ENCODE measurements at regions of chr21 and their contacts with region 1.

Region 1: GRCh38 chr21:44299458-44300261 is at the start of gene PFKL:
- DNase-seq: peak; percentile 80
- ATAC-seq: peak; percentile 65
- H3K4me3 Mint-ChIP-seq: peak within 1 kb of the TSS; percentile 86
- H3K27ac Mint-ChIP-seq: peak within 1 kb of the TSS; percentile 95
- H3K4me1 Mint-ChIP-seq: peaks cover 73% of the 10 kb centered on the region
- H3K27me3 Mint-ChIP-seq: no peaks in the 10 kb centered on the region
- CTCF ChIP-seq: no peak
- total RNA-seq, gene PFKL: 167 and 174 TPM in 2 replicates

Region 2: DNA sequence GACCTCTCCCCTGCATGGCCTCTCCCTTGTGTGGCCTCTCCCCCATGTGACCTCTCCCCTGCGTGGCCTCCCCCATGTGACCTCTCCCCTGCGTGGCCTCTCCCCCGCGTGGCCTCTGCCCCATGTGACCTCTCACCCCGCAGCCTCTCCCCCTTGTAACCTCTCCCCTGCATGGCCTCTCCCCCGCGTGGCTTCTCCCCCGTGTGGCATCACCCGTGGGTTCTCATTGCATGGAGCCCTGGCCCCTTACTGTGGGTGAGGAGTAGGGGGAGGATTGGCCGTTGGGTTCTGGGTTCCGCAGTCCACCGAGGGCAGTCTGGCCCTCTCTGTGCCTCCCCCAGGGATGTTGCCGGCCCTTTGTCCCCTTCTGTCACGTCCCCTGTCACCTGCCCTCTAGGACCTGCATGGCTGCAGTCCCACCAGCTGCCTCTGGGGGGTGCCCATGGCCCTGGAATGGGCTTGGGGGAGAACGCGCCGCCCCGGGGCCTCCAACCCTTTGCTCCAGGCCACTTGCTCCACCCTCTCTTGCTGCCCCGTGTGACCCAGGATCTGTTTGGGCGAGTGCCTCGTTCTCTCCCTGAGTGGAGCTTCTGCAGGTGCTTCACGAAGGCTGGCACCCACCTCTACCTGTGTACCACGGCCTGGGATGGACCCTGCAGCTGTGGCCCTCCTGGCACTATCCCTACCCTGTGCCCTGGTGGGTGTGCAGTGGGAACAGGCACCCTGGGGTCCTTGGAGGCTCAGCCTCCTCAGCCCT is 489.0 kb before region 1 on chr21:
- CTCF ChIA-PET with region 1: no interaction called
- POLR2A ChIA-PET with region 1: no interaction called
- intact Hi-C with region 1: loop called (anchors 10 kb)
- DNase-seq: peak; percentile 88
- ATAC-seq: peak; percentile 97
- H3K4me3 Mint-ChIP-seq: no peak overlapping the region
- H3K27ac Mint-ChIP-seq: no peak overlapping the region
- H3K4me1 Mint-ChIP-seq: peaks cover 28% of the 10 kb centered on the region
- H3K27me3 Mint-ChIP-seq: peaks cover 7% of the 10 kb centered on the region
- CTCF ChIP-seq: peak; percentile 68

Region 3: GRCh38 chr21:44199465-44199864 is 100.2 kb before region 1 on chr21:
- CTCF ChIA-PET with region 1: no interaction called
- POLR2A ChIA-PET with region 1: no interaction called
- intact Hi-C with region 1: no loop called
- DNase-seq: no peak
- ATAC-seq: no peak
- H3K4me3 Mint-ChIP-seq: no peak overlapping the region
- H3K27ac Mint-ChIP-seq: peak overlapping the region; percentile 50
- H3K4me1 Mint-ChIP-seq: peaks cover 14% of the 10 kb centered on the region
- H3K27me3 Mint-ChIP-seq: no peaks in the 10 kb centered on the region
- CTCF ChIP-seq: no peak

Region 4: GRCh38 chr21:44378646-44379514 is 79.2 kb after region 1 on chr21:
- CTCF ChIA-PET with region 1: no interaction called
- POLR2A ChIA-PET with region 1: no interaction called
- intact Hi-C with region 1: no loop called
- DNase-seq: no peak
- ATAC-seq: no peak
- H3K4me3 Mint-ChIP-seq: no peak overlapping the region
- H3K27ac Mint-ChIP-seq: no peak overlapping the region
- H3K4me1 Mint-ChIP-seq: peaks cover 23% of the 10 kb centered on the region
- H3K27me3 Mint-ChIP-seq: peaks cover 2% of the 10 kb centered on the region
- CTCF ChIP-seq: no peak

Region 5: GRCh38 chr21:44454747-44455523 is 155.3 kb after region 1 on chr21 and contains the start of gene LRRC3:
- CTCF ChIA-PET with region 1: interaction called, 3 read pairs
- POLR2A ChIA-PET with region 1: no interaction called
- intact Hi-C with region 1: loop called (anchors 10 kb)
- DNase-seq: peak; percentile 71
- ATAC-seq: peak; percentile 82
- H3K4me3 Mint-ChIP-seq: peak within 1 kb of the TSS; percentile 75
- H3K27ac Mint-ChIP-seq: no peak within 1 kb of the TSS
- H3K4me1 Mint-ChIP-seq: peaks cover 2% of the 10 kb centered on the region
- H3K27me3 Mint-ChIP-seq: peaks cover 4% of the 10 kb centered on the region
- CTCF ChIP-seq: no peak
- total RNA-seq, gene LRRC3: 0.91 and 1.00 TPM in 2 replicates

Region 6: GRCh38 chr21:44478124-44478800 is 178.6 kb after region 1 on chr21:
- CTCF ChIA-PET with region 1: no interaction called
- POLR2A ChIA-PET with region 1: no interaction called
- intact Hi-C with region 1: loop called (anchors 2 kb)
- DNase-seq: no peak
- ATAC-seq: no peak
- H3K4me3 Mint-ChIP-seq: no peak overlapping the region
- H3K27ac Mint-ChIP-seq: no peak overlapping the region
- H3K4me1 Mint-ChIP-seq: peaks cover 4% of the 10 kb centered on the region
- H3K27me3 Mint-ChIP-seq: peaks cover 4% of the 10 kb centered on the region
- CTCF ChIP-seq: no peak

Region 7: DNA sequence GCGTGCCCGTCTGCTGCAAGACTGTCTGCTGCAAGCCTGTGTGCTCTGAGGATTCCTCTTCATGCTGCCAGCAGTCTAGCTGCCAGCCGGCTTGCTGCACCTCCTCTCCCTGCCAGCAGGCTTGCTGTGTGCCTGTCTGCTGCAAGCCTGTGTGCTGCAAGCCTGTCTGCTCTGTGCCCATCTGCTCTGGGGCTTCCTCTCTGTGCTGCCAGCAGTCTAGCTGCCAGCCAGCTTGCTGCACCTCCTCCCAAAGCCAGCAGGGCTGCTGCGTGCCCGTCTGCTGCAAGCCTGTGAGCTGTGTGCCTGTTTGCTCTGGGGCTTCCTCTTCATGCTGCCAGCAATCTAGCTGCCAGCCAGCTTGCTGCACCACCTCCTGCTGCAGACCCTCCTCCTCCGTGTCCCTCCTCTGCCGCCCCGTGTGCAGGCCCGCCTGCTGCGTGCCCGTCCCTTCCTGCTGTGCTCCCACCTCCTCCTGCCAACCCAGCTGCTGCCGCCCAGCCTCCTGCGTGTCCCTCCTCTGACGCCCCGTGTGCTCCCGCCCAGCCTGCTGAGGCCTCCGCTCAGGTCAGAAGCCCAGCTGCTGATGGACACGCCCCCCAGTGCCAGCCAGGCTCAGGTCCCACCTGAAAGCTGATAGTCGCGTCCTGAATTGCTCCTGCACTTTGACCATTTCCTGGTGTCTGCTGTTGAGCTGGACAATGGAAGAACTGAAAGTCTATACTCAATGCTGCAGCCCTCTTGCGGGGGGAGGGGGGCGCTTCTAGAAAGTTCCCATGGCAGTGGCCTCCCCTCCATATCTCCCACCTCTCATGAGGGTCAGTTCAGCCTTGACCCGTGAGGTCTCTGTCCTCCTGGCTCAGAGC is 275.0 kb after region 1 on chr21:
- CTCF ChIA-PET with region 1: no interaction called
- POLR2A ChIA-PET with region 1: no interaction called
- intact Hi-C with region 1: no loop called
- DNase-seq: no peak
- ATAC-seq: no peak
- H3K4me3 Mint-ChIP-seq: no peak overlapping the region
- H3K27ac Mint-ChIP-seq: no peak overlapping the region
- H3K4me1 Mint-ChIP-seq: no peaks in the 10 kb centered on the region
- H3K27me3 Mint-ChIP-seq: peaks cover 17% of the 10 kb centered on the region
- CTCF ChIP-seq: no peak

Region 8: DNA sequence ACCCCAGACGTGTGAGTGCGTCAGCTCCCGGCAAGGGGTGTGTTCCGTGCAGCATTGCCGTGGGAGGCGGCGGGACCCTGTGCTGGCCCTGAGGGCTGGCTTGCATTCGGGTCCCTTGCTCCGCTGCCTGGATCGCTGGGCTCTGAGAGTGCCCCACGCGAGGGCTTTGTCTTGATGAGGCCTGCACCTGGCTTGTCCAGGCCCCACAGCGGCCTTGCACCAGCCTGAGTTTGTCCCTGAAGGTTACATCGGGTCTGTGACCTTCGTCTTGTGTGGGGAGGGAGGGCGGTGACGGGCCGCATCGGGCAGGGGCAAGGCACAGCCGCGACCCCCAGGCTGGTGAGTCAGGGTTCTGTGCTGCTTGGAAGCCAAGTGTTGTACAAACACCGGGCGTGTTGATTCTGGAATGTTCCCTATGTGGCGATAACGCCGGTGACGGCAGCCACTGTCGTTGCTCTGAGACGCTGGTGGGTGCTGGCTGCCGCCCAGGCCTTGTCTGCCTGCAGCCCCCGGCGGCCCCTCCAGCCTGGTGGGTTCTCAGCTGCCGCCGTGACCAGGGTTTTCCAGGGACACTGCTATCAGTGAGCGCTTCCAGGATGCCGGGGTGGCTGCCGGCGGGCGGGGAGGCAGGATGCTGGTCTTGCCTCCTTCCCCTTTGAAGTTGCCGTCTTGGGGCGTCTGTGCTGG is 683.0 kb after region 1 on chr21:
- CTCF ChIA-PET with region 1: no interaction called
- POLR2A ChIA-PET with region 1: no interaction called
- intact Hi-C with region 1: no loop called
- DNase-seq: no peak
- ATAC-seq: no peak
- H3K4me3 Mint-ChIP-seq: no peak overlapping the region
- H3K27ac Mint-ChIP-seq: no peak overlapping the region
- H3K4me1 Mint-ChIP-seq: no peaks in the 10 kb centered on the region
- H3K27me3 Mint-ChIP-seq: no peaks in the 10 kb centered on the region
- CTCF ChIP-seq: no peak

Measured in activated B cell treated with CpG ODN at 0.5 μM for 24 hours (primary cell).